Activated CD8-positive, alpha-beta T cell treated with anti-CD3 and anti-CD28 coated beads for 36 hours (primary cell): ENCODE measurements at regions of chr13 and their contacts with region 1.

Region 1: DNA sequence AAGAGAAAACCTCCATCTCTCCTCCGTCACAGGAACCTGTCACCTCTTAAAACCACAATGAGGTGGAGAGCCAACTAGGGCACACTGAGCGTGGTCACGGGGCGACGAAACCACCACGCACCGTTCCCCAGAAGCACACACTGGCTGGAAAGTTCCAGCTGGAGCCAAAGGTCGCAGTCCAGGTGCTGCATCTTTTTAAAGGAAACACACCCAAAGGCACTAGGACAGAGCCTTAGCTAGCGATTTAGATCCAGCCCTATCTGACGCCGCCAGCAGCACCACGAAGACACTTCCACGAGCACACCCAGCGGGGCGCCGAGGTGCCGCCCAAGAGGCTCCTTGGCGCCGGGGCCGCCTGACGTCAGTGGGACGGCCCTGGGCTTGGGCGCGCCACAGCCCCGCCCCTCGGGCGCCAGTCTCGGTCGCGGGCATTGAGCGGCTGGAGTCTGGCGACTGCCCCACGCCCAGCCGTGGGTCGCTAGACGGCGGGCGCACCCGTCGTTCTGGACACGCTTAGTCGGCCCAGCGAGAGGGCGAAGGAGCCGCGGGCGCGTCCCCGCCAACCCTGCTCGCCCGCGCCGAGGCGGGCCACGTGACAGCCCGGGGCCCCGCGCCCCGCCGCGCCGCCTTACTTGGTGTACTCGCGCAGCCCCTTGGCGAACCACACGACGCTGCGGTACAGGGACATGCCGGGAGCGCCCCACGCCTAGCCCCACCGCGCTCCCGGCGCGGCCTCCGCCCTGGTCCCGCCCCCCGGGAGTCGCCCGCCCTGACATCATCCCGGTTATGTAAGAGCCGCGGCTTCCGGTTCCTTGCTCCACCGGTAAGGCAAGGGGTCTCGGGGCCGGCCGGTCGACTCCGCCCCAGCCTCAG is at the start of gene DHRS12:
- DNase-seq: peak; percentile 90
- ATAC-seq: peak; percentile 78
- H3K4me3 Mint-ChIP-seq: peak within 1 kb of the TSS; percentile 95
- H3K27ac Mint-ChIP-seq: peak within 1 kb of the TSS; percentile 100
- H3K4me1 Mint-ChIP-seq: peaks cover 55% of the 10 kb centered on the region
- H3K27me3 Mint-ChIP-seq: no peaks in the 10 kb centered on the region
- CTCF ChIP-seq: no peak
- total RNA-seq, gene DHRS12: 6.6 to 6.7 TPM

Region 2: DNA sequence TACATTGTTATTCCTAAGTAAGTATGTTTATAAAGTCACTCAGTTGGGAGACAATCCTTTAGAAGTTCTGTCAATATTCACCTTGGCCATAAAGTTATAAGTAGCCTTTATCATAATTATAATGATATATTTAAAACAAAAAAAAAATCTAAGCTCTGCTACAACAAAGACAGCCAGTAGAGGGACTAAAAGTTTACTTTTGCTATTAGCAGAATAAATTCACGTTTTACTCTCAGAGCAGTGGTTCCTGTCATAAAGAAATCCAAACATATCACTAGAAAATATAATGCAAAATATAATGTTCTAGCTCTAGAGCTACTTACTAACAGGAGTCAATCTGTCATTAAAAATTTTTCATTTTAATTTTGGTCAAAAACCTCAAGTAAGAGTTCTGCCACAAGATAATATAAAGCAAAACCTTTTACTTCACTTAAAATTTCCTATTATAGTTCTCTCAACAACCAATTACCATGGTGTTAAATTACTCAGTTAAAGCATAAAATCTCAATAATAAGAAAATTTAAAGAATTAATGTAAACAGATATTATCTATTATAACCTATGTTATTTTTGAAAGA is 368.6 kb before region 1 on chr13:
- CTCF ChIA-PET with region 1: interaction called, 37 read pairs
- POLR2A ChIA-PET with region 1: no interaction called
- intact Hi-C with region 1: loop called (anchors 5 kb)
- DNase-seq: no peak
- ATAC-seq: no peak
- H3K4me3 Mint-ChIP-seq: no peak overlapping the region
- H3K27ac Mint-ChIP-seq: no peak overlapping the region
- H3K4me1 Mint-ChIP-seq: peaks cover 19% of the 10 kb centered on the region
- H3K27me3 Mint-ChIP-seq: no peaks in the 10 kb centered on the region
- CTCF ChIP-seq: peak; percentile 68

Region 3: DNA sequence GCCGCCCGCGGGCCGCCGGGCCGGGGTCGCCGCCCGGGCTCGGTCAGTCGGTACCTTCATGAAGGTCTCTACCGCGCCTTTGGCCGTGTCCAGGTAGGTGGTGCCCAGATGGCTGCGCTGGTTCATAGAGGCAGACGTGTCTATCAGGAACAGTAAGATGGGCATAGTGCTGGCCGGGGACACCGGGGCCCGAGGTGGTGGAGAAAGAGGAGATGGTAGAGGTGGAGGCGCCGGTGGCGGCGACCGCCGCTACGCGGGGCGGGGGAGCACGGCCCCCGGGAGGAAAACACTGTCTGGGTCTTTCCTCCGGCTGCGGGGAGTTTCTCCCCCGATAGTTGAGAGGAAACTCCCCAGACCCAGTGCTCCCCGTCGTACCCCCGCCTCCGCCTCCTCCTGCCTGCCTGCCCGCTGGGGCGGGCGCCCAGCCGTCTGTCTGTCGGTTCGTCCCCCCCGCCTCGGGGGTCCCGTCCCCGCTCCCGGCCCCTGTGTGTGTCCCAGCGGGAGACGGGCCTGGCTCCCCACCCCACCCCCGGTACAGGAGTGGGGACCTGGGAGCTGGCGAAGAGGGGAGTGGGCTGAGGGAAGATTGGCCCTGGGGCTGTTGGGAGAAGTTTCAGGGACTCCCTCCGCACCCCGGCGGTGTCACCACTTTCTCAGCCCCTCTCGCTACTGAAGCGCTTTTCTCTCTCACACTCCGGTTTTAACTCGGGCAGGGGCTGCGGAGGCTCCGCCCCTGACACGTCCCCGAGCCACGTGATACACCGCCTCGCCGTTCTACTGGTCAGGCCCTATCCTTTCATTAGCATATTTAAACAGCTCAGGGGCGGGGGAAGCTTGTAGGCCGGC is 351.1 kb before region 1 on chr13 and contains the start of gene INTS6:
- CTCF ChIA-PET with region 1: interaction called, 19 read pairs
- POLR2A ChIA-PET with region 1: interaction called, 7 read pairs
- intact Hi-C with region 1: loop called (anchors 2 kb)
- DNase-seq: peak; percentile 99
- ATAC-seq: peak; percentile 86
- H3K4me3 Mint-ChIP-seq: peak within 1 kb of the TSS; percentile 94
- H3K27ac Mint-ChIP-seq: peak within 1 kb of the TSS; percentile 99
- H3K4me1 Mint-ChIP-seq: peaks cover 40% of the 10 kb centered on the region
- H3K27me3 Mint-ChIP-seq: no peaks in the 10 kb centered on the region
- CTCF ChIP-seq: no peak
- total RNA-seq, gene INTS6: 52.4 to 54.5 TPM

Region 4: GRCh38 chr13:51825165-51825592 is 21.5 kb after region 1 on chr13:
- CTCF ChIA-PET with region 1: interaction called, 5 read pairs
- POLR2A ChIA-PET with region 1: interaction called, 11 read pairs
- intact Hi-C with region 1: loop called (anchors 2 kb)
- DNase-seq: no peak
- ATAC-seq: peak; percentile 26
- H3K4me3 Mint-ChIP-seq: peak overlapping the region; percentile 74
- H3K27ac Mint-ChIP-seq: peak overlapping the region; percentile 94
- H3K4me1 Mint-ChIP-seq: peaks cover 85% of the 10 kb centered on the region
- H3K27me3 Mint-ChIP-seq: no peaks in the 10 kb centered on the region
- CTCF ChIP-seq: no peak